G401 (cell line): ENCODE measurements at regions of chr5 and their contacts with region 1.

Region 1: GRCh38 chr5:57137401-57137800 is 36.5 kb upstream of the GPBP1 start:
- DNase-seq: no peak

Region 2: DNA sequence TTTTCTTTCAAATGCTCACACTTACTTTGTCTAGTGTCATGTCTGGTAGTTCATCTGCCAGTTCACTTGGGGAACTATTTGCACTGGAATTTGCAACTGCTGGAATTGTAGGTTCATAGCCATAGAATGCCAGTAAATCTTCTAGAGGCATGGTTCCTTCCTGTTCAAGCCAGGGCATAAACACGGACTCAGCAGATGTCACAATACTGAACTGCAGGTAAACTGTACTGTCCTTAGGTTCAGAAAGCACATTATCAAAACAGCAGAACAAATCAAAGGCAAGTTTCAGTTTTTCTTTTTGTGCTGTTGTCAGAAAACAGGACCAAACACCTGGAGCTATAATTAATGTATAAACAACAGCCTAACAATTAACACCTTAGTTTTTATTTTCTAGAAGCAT is 198.5 kb before region 1 on chr5:
- in situ Hi-C with region 1: loop called (anchors 10 kb)
- DNase-seq: no peak